ENCODE measurements at regions of chr3 and their contacts with region 1.

Region 1: GRCh38 chr3:141487521-141488252 is 860 bp downstream of the RASA2 start:
- DNase-seq: peak; percentile 70
- ATAC-seq: peak; percentile 56
- H3K4me3 ChIP-seq: peak overlapping the region; percentile 90
- H3K27ac ChIP-seq: peak overlapping the region; percentile 65
- H3K4me1 ChIP-seq: peaks cover 23% of the 10 kb centered on the region
- H3K27me3 ChIP-seq: no peaks in the 10 kb centered on the region
- CTCF ChIP-seq: no peak

Region 2: DNA sequence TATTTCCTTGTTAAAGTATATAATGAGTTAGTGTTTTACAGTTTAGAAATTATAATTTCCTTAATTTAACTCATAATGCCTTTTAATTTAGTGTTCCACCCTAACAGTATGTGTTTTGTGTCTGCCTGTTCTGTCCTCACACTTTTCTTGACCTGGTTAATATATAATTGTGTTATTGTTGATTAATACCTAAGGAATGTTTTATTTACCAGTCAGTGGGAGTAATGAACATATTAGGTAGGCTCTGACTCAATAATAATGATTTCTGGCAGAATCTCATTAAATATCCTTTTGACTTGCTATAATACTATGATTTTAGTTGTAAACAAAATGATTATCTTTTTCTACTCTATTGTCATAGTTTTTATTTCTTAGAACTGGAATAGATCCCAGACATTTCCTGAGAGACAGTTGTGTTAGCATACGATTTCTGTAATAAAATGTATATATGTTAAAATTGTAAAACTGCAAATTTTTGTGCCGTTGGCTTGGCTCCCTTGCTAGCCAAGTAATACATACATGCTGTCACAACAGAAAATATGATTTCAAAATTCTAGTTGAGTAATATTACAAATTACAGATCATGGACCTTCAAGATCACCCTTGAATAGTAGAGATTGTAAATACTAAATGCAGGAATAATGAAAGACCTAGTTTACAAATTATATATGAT is 51.0 kb after region 1 on chr3:
- CTCF ChIA-PET with region 1: no interaction called
- POLR2A ChIA-PET with region 1: no interaction called
- intact Hi-C with region 1: loop called (anchors 5 kb)
- DNase-seq: peak; percentile 20
- ATAC-seq: peak; percentile 45
- H3K4me3 ChIP-seq: no peak overlapping the region
- H3K27ac ChIP-seq: no peak overlapping the region
- H3K4me1 ChIP-seq: peaks cover 4% of the 10 kb centered on the region; the same call in 1 of the 2 replicates
- H3K27me3 ChIP-seq: no peaks in the 10 kb centered on the region
- CTCF ChIP-seq: no peak

Region 3: DNA sequence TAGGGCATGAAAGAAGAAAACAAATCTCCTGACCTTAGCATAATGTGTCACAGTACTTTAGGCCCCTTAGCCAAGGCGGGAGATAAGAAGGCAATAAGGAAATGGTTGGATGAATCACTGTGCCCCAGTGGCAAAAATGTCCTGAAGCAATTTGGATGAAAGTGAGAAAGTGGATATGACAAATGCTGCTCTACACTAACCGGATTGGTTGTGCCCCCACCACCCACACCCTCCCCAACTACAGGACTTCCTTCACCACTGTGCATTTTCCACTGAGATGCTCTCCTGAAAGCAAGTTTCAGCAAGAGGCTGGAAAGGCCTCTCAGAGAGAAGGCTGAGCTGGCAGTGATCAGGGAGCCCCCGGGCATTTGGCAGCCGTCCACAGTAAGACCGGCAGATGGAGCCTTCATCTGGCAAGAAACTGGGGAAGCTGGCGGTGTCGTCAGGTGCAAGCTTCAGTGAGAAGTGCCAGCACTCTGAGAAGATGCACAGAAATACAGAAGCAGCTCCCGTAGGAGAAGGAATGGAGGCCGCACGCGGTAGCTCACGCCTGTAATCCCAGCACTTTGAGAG is 452.6 kb after region 1 on chr3:
- CTCF ChIA-PET with region 1: no interaction called
- POLR2A ChIA-PET with region 1: interaction called, 29 read pairs
- intact Hi-C with region 1: no loop called
- DNase-seq: peak; percentile 93
- ATAC-seq: peak; percentile 92
- H3K4me3 ChIP-seq: peak overlapping the region; percentile 24; the same call in 1 of the 2 replicates
- H3K27ac ChIP-seq: peak overlapping the region; percentile 60
- H3K4me1 ChIP-seq: peaks cover 22% of the 10 kb centered on the region
- H3K27me3 ChIP-seq: no peaks in the 10 kb centered on the region
- CTCF ChIP-seq: no peak

Region 4: DNA sequence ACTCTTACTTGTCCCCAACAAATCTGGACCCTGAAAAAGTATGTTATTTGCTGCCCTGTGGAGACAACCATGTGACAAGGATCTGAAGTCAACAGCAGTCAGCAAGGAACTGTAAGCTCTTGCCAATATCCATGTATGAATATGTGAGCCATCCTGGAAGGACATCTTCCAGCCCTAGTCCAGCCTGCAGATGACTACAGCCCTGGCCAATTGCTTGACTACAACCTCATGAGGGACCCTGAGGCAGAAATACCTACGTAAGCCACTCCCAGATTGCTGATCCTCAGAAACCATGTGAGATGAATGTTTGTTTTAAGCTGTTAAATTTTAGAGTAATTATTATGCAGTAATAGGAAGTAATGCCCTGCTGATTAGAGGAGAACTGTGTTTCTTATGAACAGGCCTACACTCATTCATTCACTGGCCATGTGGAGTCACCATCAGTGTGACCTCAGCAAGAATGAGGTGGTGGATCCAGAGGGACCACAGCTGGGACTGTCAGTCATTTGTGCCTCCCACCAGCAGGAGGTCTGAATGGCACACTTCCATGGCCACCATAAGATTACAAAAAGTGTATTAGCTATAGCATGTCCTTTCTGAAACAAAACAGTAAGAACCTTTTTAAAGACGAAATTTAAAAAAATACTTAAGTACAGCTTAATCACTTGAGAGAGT is 569.1 kb after region 1 on chr3:
- CTCF ChIA-PET with region 1: no interaction called
- POLR2A ChIA-PET with region 1: no interaction called
- intact Hi-C with region 1: no loop called
- DNase-seq: no peak
- ATAC-seq: no peak
- H3K4me3 ChIP-seq: no peak overlapping the region
- H3K27ac ChIP-seq: no peak overlapping the region
- H3K4me1 ChIP-seq: no peaks in the 10 kb centered on the region
- H3K27me3 ChIP-seq: no peaks in the 10 kb centered on the region
- CTCF ChIP-seq: no peak